ENCODE measurements at regions of chr3 and their contacts with region 1.

Region 1: DNA sequence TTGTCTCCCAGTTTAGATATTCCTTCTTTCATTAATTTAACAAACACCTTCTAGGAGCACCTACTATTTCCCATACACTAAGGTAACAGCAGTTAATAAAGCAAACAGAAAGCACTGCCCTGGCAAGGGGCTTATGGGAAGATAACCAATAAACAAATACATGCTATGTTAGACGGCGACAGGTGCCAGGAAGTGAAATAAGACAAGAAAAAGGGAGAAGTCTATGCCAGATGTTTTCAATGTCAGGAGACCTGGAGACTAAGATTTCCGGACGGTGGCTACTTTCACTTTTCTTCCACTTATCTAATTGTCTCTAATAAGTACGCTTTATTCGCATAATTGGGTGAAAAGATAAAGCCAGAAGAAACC is 32.5 kb upstream of the ZNF445 start:
- DNase-seq: peak; percentile 27
- H3K4me3 ChIP-seq: peak overlapping the region; percentile 92
- H3K27ac ChIP-seq: peak overlapping the region; percentile 77
- H3K4me1 ChIP-seq: no peaks in the 10 kb centered on the region
- H3K27me3 ChIP-seq: no peaks in the 10 kb centered on the region
- CTCF ChIP-seq: no peak

Region 2: GRCh38 chr3:44338010-44338827 is 171.8 kb before region 1 on chr3 and contains the start of gene TCAIM:
- intact Hi-C with region 1: loop called (anchors 10 kb)
- DNase-seq: peak; percentile 98
- H3K4me3 ChIP-seq: peak within 1 kb of the TSS; percentile 63
- H3K27ac ChIP-seq: peak within 1 kb of the TSS; percentile 85
- H3K4me1 ChIP-seq: peaks cover 5% of the 10 kb centered on the region
- H3K27me3 ChIP-seq: no peaks in the 10 kb centered on the region
- CTCF ChIP-seq: no peak
- total RNA-seq, gene TCAIM: 20.2 to 26.2 TPM